ENCODE measurements at regions of chr22 and their contacts with region 1.

Region 1: DNA sequence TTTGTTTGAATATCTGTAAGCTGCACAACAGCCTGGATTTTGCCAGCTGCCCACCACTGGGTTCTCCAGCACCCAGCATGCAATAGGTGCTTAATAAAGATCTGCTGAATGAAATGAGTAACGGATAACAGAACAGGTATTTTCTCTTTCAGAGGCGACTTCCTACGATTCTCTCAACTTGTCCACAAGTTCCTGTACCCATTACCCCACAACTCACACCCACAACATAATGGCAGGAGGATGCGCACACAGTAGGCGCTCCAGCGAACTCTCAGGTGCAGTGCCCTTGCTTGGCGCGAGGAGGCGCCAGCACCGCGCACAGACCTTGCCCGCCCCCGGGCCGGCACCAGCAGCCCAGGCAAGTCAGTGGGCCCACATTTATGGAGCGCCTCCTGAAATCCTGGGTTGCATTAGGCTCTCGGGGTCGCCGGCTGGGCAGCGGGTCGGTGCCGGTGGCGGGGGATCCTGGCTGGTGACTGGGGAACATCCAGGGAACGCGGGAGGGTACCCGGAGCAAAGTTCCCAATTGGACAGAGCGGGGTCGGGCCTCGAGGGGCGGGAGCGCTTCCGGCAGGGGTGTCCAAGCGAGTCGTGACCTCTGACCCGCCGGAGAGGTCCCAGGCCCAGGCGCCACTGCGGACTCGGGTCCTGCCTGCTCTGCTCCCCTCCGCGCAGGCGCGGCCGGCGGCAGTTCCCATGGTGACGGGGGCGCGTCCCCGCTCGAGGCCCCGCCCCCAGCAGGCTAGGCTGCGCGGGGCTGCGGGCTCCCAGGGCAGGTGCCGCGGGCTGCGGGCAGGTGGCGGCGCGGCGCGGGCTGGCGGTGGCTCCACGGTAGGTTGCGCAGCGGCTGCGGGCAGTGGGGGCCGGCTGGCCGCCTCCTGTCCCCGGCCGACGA is at the start of gene KIAA1671:
- ATAC-seq: peak; percentile 82 to 92 (median 89)
- H3K4me3 ChIP-seq: peak within 1 kb of the TSS; percentile 52 to 76 (median 66)
- H3K27ac ChIP-seq: peak within 1 kb of the TSS; percentile 30 to 79
- H3K4me1 ChIP-seq: peaks cover 11 to 14% of the 10 kb centered on the region in 2 donors
- total RNA-seq, gene KIAA1671: 4.2 to 27.9 (median 10.2) TPM

Region 2: DNA sequence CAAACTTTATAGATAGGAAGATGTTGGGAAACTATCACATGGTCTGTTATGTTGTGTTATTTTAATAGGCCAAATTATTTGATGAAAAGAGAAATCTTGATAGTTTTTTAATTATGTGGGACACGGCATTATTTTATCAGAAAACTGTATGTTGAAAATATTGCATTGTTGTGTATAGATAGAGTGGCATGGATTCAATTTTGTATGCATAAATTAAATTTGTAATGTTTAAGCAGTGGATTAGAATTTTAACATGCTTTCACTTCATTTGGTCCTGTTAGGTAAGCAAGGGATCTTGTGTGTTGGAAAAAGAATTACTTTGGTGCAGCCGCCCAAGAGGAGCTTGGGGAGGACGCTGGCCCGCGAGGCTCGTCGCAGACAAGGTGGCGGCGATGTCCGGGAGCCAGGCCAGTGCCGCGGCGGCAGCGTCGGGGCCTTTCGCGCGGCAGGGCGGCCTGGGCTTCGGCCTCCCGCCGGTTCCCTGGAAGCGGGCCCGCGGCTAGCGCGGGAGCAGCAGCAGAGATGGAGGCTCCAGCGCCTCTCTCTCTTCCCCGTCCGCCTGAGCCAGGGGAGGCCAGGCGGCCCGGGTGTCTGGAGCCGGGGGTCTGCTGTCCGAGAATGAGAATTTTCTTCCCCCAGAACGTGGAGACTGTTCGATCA is 266.5 kb before region 1 on chr22:
- in situ Hi-C with region 1: no loop called
- ATAC-seq: peak in 2 of 8 experiments; percentile 20 to 23
- H3K4me3 ChIP-seq: no peak overlapping the region
- H3K27ac ChIP-seq: no peak overlapping the region
- H3K4me1 ChIP-seq: peaks cover 3 to 4% of the 10 kb centered on the region in 2 donors

Region 3: DNA sequence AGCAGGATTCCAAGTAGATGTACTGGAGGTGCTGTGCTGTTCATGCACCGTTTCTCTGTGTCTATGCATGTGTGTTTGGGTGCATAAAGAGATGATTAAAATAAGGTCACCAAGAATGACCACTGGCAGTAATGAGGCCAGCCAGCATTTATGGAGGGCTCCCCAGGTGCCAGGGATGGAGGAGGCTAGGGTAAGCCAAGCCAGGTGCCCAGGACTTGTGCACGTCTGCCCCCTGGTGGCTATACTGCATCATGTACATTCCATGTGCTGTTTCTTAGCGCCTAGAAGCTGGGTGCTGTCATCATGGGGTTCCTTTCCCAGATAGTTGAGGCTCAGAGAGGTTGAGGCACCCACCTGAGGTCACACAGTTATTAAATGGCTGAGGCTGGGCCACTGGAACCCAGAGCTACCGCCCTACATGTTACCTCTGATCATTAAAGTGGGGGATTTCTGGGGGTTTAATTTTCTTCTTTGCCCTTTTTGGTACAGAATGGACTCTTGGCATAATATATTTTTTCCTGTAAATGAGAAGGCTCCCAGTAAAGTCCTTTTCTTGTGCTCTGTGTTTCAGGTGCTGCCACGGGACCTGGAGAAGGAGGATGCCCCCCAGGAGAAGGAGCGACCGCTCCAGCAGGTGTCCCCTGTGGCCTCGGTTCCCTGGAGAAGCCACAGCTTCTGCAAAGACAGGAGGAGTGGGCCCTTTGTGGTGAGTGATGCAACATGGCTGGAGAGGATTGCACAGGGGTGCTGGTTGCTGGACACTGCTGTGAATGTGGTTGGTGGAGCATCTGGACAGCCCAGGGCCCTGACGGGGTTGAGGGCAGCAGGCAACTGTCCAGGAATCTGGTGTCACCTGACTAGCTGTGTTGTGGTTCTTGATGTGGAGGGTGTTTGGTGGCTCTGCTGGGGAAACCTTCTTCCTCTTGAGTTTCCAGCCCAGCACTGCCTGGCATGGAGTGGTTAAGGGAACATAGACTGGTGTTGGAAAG is 96.8 kb after region 1 on chr22:
- in situ Hi-C with region 1: loop called in 7 of 9 experiments (anchors 5 to 25 kb)
- ATAC-seq: peak; percentile 39 to 85 (median 64)
- H3K4me3 ChIP-seq: no peak overlapping the region
- H3K27ac ChIP-seq: no peak overlapping the region
- H3K4me1 ChIP-seq: no peaks in the 10 kb centered on the region

Region 4: GRCh38 chr22:25057013-25057881 is 105.1 kb after region 1 on chr22:
- in situ Hi-C with region 1: loop called in 2 of 9 experiments (anchors 10 to 25 kb)
- ATAC-seq: peak; percentile 76 to 99 (median 90)
- H3K4me3 ChIP-seq: no peak overlapping the region
- H3K27ac ChIP-seq: no peak overlapping the region
- H3K4me1 ChIP-seq: no peaks in the 10 kb centered on the region